ENCODE measurements at regions of chr19 and their contacts with region 1.

Region 1: DNA sequence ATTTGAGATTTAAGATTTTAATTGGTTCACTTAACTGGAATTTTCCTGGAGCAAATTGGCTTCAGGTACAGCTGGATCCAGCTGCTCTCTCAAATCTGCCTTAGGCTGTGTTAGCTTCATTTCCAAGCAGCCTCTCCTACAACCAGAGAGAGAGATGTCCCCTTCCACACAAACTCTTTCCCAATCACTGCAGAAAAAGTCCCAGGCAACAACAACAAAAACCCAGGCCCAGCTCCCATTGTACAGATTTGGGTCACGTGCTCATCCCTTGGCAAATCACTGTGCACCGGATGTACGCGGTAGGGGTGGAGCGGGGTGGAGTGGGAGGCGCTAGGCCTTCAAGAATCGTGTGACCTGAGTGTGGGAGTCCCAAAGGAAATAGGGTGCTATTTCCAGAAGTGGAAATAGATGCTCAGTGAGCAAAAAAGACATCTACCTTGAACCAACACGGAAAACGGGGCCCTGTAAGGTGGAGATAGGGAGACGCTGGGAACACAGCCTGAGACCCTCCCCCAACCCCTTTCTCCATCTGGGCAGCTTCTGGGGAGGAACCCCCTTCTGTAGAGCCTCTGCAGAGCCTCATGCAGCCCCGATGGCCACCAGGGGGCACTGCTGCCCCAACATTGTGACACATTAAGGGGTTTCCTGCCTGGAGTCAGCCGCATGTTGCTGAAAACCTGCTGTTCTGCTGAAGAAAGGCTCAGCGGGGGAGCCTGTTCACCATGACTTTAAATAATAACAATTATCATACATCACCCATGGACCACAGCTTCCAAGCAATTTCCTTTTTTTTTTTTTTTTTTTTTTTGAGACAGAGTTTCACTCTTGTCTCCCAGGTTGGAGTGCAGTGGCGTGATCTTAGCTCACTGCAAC is 25.4 kb downstream of the HPN start:
- DNase-seq: peak; percentile 94
- H3K4me3 Mint-ChIP-seq: peak overlapping the region; percentile 21
- H3K27ac Mint-ChIP-seq: peak overlapping the region; percentile 55
- H3K4me1 Mint-ChIP-seq: peaks cover 18% of the 10 kb centered on the region
- H3K27me3 Mint-ChIP-seq: no peaks in the 10 kb centered on the region

Region 2: DNA sequence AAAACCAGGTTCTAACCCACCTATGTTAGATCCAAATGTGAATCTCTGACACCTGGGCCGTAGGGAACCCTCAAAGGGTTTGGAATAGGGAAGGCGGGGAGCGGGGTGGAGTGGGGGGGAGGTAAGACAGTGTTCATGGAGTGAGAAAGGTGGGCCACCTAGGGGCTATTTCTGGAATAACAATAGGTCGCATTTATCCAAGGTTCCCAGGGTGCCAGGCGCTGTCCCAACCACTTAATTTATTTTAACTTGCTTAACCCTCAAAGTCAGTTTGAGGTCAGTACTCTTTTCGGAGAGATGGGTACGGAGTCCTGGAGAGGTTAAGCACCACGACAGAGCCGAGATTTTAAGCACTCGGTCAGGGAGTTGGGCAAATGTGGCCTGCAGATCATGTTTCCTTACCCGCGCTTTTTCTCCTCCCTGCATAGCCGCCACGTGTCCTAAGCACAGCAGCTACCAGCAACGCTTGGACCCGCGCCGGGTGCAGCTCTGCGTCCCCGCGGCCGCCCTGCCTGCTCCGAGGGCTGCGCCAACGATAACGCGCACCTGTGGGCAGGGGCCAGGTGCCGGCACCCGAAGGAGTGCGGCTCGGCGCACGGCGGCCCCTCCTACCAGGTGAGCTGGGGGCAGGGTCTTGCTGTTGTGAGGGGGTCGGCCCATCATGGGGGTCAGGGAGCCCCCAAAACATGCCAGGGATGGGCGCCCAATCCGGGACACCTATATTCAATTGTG is 23.7 kb after region 1 on chr19:
- CTCF ChIA-PET with region 1: interaction called, 20 read pairs
- POLR2A ChIA-PET with region 1: no interaction called
- intact Hi-C with region 1: loop called (anchors 2 kb)
- DNase-seq: peak; percentile 50
- H3K4me3 Mint-ChIP-seq: no peak overlapping the region
- H3K27ac Mint-ChIP-seq: no peak overlapping the region
- H3K4me1 Mint-ChIP-seq: peaks cover 9% of the 10 kb centered on the region
- H3K27me3 Mint-ChIP-seq: peaks cover 6% of the 10 kb centered on the region

Region 3: GRCh38 chr19:35124098-35125060 is 57.5 kb after region 1 on chr19:
- CTCF ChIA-PET with region 1: interaction called, 11 read pairs
- POLR2A ChIA-PET with region 1: no interaction called
- intact Hi-C with region 1: no loop called
- DNase-seq: peak; percentile 92
- H3K4me3 Mint-ChIP-seq: peak overlapping the region; percentile 71
- H3K27ac Mint-ChIP-seq: peak overlapping the region; percentile 20
- H3K4me1 Mint-ChIP-seq: peaks cover 15% of the 10 kb centered on the region
- H3K27me3 Mint-ChIP-seq: no peaks in the 10 kb centered on the region

Region 4: GRCh38 chr19:35135389-35135909 is 68.5 kb after region 1 on chr19:
- CTCF ChIA-PET with region 1: interaction called, 59 read pairs
- POLR2A ChIA-PET with region 1: no interaction called
- intact Hi-C with region 1: loop called (anchors 1 kb)
- DNase-seq: peak; percentile 82
- H3K4me3 Mint-ChIP-seq: no peak overlapping the region
- H3K27ac Mint-ChIP-seq: no peak overlapping the region
- H3K4me1 Mint-ChIP-seq: peaks cover 3% of the 10 kb centered on the region
- H3K27me3 Mint-ChIP-seq: no peaks in the 10 kb centered on the region

Region 5: GRCh38 chr19:35140962-35141637 is 74.2 kb after region 1 on chr19:
- CTCF ChIA-PET with region 1: interaction called, 59 read pairs
- POLR2A ChIA-PET with region 1: interaction called, 5 read pairs
- intact Hi-C with region 1: no loop called
- DNase-seq: peak; percentile 99
- H3K4me3 Mint-ChIP-seq: peak overlapping the region; percentile 71
- H3K27ac Mint-ChIP-seq: no peak overlapping the region
- H3K4me1 Mint-ChIP-seq: peaks cover 30% of the 10 kb centered on the region
- H3K27me3 Mint-ChIP-seq: no peaks in the 10 kb centered on the region

Region 6: DNA sequence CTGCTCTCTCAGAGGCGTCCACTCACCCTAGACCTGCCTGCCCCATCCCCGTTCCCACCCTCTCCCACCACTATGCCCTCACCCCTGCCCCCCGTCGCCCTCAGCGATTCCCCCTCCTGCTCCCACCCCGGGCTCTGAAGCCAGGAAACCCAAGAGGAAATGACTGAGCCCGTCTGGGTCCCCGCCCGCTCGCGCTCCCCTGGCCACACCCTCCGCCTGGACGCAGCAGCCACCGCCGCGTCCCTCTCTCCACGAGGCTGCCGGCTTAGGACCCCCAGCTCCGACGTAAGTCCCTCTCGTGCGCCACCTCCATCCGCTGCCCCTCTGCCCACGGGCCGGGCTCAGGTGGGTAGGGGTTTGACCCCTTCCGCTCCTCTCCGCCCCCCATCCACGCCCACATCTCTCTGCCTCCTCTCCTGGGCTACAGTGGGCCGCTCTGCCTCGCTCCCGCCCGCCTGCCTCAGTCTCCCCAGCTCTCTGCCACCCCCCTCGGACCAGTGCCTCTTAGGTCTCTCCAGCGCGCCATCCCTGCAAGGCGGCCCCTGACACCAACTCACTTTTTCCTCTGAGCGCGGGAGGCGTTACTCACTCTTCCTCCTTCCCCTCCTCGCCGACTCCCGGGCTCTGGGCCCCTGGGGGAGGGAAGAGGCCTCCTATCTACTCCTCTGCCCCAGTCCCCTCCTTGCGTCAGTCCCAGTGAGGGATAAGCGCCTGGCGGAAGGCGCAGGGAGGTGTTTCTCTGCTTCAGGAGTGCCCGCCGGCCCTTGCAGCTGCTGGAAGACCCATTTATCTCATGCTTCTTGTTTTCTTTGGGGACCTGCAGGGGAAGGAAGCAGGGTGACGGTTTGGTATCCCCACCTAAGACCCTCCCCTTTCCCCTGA is 87.8 kb after region 1 on chr19 and contains the start of gene FXYD5:
- CTCF ChIA-PET with region 1: interaction called, 15 read pairs
- POLR2A ChIA-PET with region 1: no interaction called
- intact Hi-C with region 1: no loop called
- DNase-seq: peak; percentile 93
- H3K4me3 Mint-ChIP-seq: peak within 1 kb of the TSS; percentile 98
- H3K27ac Mint-ChIP-seq: peak within 1 kb of the TSS; percentile 99
- H3K4me1 Mint-ChIP-seq: peaks cover 50% of the 10 kb centered on the region
- H3K27me3 Mint-ChIP-seq: no peaks in the 10 kb centered on the region
- total RNA-seq, gene FXYD5: 334 to 360 TPM